ENCODE measurements at regions of chr7 and their contacts with region 1.

Region 1: DNA sequence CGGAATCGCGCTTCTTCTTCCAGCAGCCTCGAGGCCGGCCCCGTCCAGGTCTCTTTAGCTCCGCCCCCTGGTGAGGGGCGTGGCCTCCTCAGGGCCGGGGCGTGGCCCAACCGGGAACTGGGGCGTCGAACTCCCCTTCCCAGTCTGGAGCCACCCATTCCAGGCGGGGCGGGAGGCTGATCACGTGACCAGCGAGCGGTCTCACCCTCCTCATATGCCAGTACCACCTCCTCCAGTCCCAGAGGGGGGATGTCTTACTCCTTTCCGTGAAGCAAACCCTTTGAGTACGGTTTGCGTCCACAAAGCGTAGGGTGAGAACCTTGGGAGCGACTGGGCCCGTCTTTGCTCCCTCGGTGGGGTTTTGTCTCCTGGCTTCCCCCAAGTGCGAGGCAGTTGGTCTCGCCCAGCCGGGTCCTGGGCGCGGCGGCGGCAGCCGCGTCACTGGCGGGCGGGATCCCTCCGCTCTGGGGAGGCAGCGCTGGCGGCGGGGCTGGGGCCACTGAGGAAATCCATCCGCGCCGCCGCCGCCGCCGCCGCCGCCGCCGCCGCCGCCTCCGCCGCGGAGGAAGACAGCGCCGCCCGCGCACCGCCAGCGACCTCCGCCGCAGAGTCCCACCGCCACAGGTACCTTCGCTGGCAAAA is at the start of gene GNB2:
- DNase-seq: peak; percentile 99
- H3K4me3 ChIP-seq: peak within 1 kb of the TSS; percentile 98
- H3K27ac ChIP-seq: peak within 1 kb of the TSS; percentile 99
- H3K4me1 ChIP-seq: no peaks in the 10 kb centered on the region
- H3K27me3 ChIP-seq: no peaks in the 10 kb centered on the region
- CTCF ChIP-seq: no peak
- total RNA-seq, gene GNB2: 225 and 243 TPM in 2 replicates

Region 2: GRCh38 chr7:100091411-100092181 is 581.8 kb before region 1 on chr7:
- CTCF ChIA-PET with region 1: no interaction called
- POLR2A ChIA-PET with region 1: interaction called, 26 read pairs
- intact Hi-C with region 1: no loop called
- DNase-seq: peak; percentile 66
- H3K4me3 ChIP-seq: no peak overlapping the region
- H3K27ac ChIP-seq: peak overlapping the region; percentile 24
- H3K4me1 ChIP-seq: peaks cover 40% of the 10 kb centered on the region
- H3K27me3 ChIP-seq: no peaks in the 10 kb centered on the region
- CTCF ChIP-seq: no peak

Region 3: GRCh38 chr7:100478966-100479665 is 194.3 kb before region 1 on chr7 and contains the start of gene TSC22D4:
- CTCF ChIA-PET with region 1: no interaction called
- POLR2A ChIA-PET with region 1: no interaction called
- intact Hi-C with region 1: loop called (anchors 5 kb)
- DNase-seq: peak; percentile 96
- H3K4me3 ChIP-seq: peak within 1 kb of the TSS; percentile 87
- H3K27ac ChIP-seq: peak within 1 kb of the TSS; percentile 81
- H3K4me1 ChIP-seq: peaks cover 31% of the 10 kb centered on the region
- H3K27me3 ChIP-seq: no peaks in the 10 kb centered on the region
- CTCF ChIP-seq: no peak
- total RNA-seq, gene TSC22D4: 69.0 and 71.0 TPM in 2 replicates

Region 4: DNA sequence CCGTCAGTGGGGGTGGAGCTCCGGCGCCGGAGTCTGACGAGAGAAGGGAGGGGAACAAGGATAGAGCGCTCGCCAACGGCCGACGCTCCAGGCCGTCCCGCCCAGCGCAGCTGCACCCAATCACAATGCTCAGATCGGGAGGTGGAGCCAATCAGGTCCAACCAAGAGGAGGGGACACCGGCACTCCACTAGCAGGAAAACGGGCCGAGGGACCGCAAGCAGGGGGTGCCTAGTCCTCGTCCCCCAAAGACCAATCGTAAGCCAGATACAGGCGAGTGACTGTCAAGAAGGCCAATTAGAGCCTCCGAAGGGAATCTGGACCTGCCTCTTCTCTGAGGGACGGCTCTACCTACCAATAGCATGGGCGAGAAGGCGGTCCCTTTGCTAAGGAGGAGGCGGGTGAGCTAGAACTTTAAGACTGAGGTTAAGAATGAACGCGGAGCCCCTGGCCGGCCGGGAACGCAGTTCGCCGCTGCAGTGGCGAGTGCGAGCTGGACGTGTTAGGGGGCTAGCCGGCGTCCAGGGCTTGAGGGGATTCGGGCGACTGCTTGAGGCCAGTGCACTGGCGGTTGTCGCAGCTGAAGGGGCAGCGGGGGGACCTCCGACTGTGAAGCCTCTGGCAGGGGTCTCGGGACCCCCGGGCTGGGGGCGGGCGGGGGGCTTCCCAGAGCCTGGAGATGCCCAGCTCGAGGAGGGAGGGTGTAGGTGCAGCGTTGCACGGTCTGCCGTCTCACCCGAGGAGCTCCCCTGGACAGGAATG is 87.0 kb before region 1 on chr7 and contains the start of gene FBXO24:
- CTCF ChIA-PET with region 1: no interaction called
- POLR2A ChIA-PET with region 1: no interaction called
- intact Hi-C with region 1: loop called (anchors 10 kb)
- DNase-seq: peak; percentile 100
- H3K4me3 ChIP-seq: peak within 1 kb of the TSS; percentile 93
- H3K27ac ChIP-seq: peak within 1 kb of the TSS; percentile 96
- H3K4me1 ChIP-seq: peaks cover 25% of the 10 kb centered on the region
- H3K27me3 ChIP-seq: no peaks in the 10 kb centered on the region
- CTCF ChIP-seq: no peak
- total RNA-seq, gene FBXO24: 0.44 and 0.75 TPM in 2 replicates

Region 5: DNA sequence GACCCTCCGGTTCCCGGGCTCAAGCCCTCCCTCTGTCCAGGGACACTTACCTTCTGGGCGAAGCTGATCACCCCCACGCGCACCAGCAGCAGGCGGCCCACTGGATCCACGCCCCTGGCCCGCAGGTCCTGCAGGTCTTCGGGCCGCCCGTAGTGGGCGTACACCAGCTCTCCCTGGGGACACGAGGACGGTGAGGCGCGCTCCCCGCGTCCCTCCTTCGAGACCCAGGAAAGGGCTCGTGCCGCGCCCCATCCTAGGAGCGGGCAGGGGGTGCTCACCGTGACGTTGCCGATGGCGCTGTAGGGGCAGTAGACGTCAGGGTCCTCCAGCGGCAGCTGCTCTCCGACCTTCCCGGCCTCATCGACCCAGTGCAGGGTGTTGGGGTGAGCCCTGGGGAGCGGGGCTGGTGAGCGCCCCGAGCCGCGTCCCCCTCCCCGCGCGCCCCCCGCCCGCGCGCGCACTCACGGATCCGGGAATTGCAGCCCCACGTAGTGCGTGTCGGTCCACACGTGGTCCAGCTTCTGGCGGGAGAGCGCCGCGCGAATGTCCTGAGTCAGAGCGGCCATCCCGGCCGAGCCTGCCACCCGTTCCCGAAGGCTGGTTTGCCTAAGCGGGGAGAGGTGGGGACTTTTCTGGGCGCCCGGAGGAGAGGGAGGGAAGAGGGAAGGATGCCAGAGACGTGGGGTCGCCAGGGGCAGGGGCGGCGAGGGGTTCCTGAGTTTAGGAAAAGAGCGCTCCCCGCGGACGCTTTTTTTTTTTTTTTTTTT is 40.3 kb before region 1 on chr7:
- CTCF ChIA-PET with region 1: interaction called, 3 read pairs
- POLR2A ChIA-PET with region 1: no interaction called
- intact Hi-C with region 1: loop called (anchors 5 kb)
- DNase-seq: peak; percentile 61
- H3K4me3 ChIP-seq: peak overlapping the region; percentile 48
- H3K27ac ChIP-seq: peak overlapping the region; percentile 15
- H3K4me1 ChIP-seq: peaks cover 7% of the 10 kb centered on the region
- H3K27me3 ChIP-seq: peaks cover 8% of the 10 kb centered on the region
- CTCF ChIP-seq: peak; percentile 42; the same call in 1 of the 2 replicates